GM12878 (cell line): ENCODE measurements at regions of chrX and their contacts with region 1.

Region 1: GRCh38 chrX:130079824-130080406 is 30.4 kb downstream of the ELF4 start:
- DNase-seq: no peak
- ATAC-seq: peak; percentile 14; the same call in 2 of the 3 replicates
- H3K4me3 ChIP-seq: no peak overlapping the region
- H3K27ac ChIP-seq: no peak overlapping the region
- H3K4me1 ChIP-seq: peaks cover 26% of the 10 kb centered on the region
- H3K27me3 ChIP-seq: no peaks in the 10 kb centered on the region; a peak in 1 of 4 replicates
- CTCF ChIP-seq: peak; percentile 76 to 85 (median 77)
- EP300 ChIP-seq: no peak
- POLR2A ChIP-seq: no peak
- RAD21 ChIP-seq: peak; percentile 91

Region 2: DNA sequence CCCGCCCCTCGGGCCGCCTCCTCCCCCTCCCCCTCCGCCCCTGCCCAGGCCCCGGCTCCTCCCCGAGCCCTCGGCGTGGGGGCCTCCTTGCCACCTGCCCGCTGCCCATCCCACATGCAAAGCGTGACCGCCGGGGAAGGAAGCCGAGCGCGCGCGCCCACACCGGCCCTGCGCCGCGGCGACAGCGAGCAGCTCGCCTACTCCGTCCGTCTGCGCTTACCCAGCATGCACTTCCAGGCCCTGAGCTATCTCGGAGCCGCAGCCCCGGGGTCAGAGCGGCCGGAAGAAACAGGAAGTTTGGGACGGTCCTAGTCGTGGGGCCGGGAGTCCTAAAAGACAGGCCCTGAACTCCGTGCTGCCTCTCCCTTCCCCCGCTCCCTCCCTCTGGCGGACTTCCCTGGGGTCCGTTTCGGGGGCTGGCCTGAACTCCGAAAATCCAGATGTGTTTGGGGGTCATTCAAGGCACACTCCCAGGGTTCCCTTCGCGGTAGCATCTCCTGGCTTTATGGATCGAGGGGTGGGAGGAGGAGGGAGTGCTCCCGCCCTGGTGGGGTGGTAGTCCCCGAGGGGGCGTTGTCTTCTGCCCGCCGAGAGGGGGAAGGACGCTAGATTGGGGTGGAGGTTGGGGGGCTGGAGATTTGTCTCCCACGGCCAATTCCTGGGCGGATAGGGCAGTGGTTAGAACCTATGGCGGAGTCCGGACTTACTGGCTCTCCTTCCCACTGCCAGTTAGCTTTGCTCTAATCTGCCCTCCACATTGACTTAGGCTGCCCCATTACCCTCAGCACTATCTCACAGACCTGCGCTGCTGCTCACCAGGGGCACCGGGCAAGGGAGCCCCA is 122.5 kb before region 1 on chrX:
- CTCF ChIA-PET with region 1: no interaction called
- POLR2A ChIA-PET with region 1: no interaction called
- RAD21 ChIA-PET with region 1: no interaction called
- SMC1A ChIA-PET with region 1: no interaction called
- in situ Hi-C with region 1: no loop called
- intact Hi-C with region 1: no loop called
- DNase-seq: peak; percentile 34
- ATAC-seq: peak; percentile 82
- H3K4me3 ChIP-seq: peak overlapping the region; percentile 61; the same call in 1 of the 2 replicates
- H3K27ac ChIP-seq: peak overlapping the region; percentile 35; the same call in 1 of the 2 replicates
- H3K4me1 ChIP-seq: peaks cover 7% of the 10 kb centered on the region
- H3K27me3 ChIP-seq: no peaks in the 10 kb centered on the region
- CTCF ChIP-seq: no peak
- EP300 ChIP-seq: no peak
- POLR2A ChIP-seq: peak; percentile 78
- RAD21 ChIP-seq: no peak

Region 3: DNA sequence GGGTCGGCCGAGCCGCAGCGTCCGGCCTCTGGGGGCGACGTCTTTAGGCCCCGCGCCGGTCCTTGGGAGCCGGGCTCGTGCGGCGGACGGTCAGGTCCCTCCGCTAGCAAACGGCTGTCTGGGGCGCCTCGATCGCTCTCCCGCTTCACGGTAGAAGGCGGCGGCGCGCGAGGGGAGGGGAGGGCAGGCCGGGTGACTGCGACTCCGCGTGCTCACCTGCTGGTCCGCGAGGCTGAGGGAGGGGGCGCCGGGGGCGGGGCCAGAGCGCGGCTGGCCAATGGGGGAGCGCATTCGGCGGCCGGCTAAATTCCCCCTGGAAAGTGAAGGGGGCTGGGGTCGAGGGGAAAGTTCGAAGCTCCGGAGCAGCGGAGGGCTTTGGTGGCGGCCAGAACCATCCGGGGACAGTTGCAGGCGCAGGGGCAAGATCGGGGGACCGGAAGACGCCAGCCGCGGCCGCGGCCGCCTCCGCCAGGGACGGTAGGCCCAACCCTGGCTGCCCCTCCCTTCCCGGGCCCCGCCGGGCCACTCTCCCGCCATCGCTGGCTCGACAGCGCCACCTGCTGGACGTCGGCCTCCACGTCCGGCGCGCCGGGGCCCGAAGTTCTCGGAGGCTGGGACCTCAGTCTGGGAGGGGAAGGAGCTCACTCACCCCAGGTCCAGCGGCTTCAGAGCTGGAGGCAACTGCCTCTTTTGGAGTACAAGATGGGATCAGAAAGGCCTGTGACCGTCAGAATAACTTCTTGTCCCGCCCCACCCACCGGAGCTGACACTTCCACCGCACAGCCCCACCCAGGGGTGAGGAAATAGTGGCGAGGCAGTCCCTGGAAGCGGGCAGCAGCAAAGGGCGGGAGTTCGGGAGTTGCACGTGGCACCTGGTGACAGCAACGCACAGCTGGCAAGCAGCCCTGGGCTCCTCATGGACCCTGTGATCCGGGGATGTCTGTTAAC is 19.5 kb before region 1 on chrX:
- CTCF ChIA-PET with region 1: interaction called, 16 read pairs
- POLR2A ChIA-PET with region 1: no interaction called
- RAD21 ChIA-PET with region 1: no interaction called
- SMC1A ChIA-PET with region 1: interaction called, 3 read pairs
- in situ Hi-C with region 1: no loop called
- intact Hi-C with region 1: no loop called
- DNase-seq: no peak
- ATAC-seq: peak; percentile 98
- H3K4me3 ChIP-seq: peak overlapping the region; percentile 36; the same call in 1 of the 2 replicates
- H3K27ac ChIP-seq: no peak overlapping the region
- H3K4me1 ChIP-seq: peaks cover 3% of the 10 kb centered on the region; the same call in 1 of the 2 replicates
- H3K27me3 ChIP-seq: no peaks in the 10 kb centered on the region
- CTCF ChIP-seq: peak; percentile 66 to 90 (median 76)
- EP300 ChIP-seq: no peak
- POLR2A ChIP-seq: peak; percentile 66
- RAD21 ChIP-seq: peak; percentile 79

Region 4: GRCh38 chrX:130110379-130111219 is 30.7 kb after region 1 on chrX and contains the start of gene ELF4:
- CTCF ChIA-PET with region 1: interaction called, 9 read pairs
- POLR2A ChIA-PET with region 1: interaction called, 27 read pairs
- RAD21 ChIA-PET with region 1: interaction called, 16 read pairs
- SMC1A ChIA-PET with region 1: interaction called, 36 read pairs
- in situ Hi-C with region 1: no loop called
- intact Hi-C with region 1: loop called (anchors 1 kb)
- DNase-seq: no peak
- ATAC-seq: peak; percentile 39
- H3K4me3 ChIP-seq: peak within 1 kb of the TSS; percentile 66
- H3K27ac ChIP-seq: peak within 1 kb of the TSS; percentile 78
- H3K4me1 ChIP-seq: peaks cover 15% of the 10 kb centered on the region
- H3K27me3 ChIP-seq: no peaks in the 10 kb centered on the region; a peak in 1 of 4 replicates
- CTCF ChIP-seq: no peak
- EP300 ChIP-seq: no peak
- POLR2A ChIP-seq: peak; percentile 51; the same call in 1 of the 2 replicates
- RAD21 ChIP-seq: no peak
- polyA plus RNA-seq, gene ELF4: 4.0 to 5.2 TPM

Region 5: DNA sequence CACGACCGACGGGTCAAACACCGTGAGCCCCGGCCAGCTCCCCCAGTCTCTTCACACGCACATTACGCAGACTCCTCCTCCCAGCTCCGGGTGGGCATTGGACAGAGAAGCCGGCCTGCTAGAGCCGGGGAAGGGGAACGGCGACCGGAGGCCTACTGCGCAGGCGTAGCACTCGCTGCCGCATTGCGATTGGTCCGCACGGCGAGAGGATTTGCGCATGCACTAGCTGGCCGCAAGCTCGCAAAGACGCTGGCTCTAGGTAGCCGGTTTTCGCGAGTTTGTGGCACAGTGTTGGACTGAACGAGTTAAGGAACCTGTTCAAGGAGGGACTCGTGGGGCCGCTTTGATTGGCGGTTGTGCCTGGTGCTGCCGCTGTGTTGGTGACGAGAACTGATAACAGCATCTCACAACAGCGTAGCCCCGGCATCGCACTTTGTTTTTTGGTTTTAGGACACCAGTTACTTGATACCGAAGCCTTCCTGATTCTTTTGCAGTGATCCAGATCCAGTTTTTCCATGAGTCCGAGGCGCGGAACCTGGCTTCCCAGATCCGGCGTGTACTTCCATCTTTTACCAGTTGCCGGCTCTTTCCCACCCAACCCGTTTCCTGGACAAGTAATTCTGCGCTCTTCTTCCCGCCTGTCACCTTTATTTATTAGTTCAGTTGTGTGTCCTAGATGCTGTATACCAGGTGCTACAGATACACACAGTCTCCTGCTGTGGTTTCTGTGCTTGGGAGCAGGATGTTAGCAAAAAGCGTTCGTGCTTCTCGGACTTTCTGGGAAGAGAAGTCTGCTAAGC is 86.0 kb after region 1 on chrX and contains the start of gene AIFM1:
- CTCF ChIA-PET with region 1: interaction called, 11 read pairs
- POLR2A ChIA-PET with region 1: interaction called, 28 read pairs
- RAD21 ChIA-PET with region 1: interaction called, 4 read pairs
- SMC1A ChIA-PET with region 1: interaction called, 13 read pairs
- in situ Hi-C with region 1: loop called (anchors 10 kb)
- intact Hi-C with region 1: loop called (anchors 5 kb)
- DNase-seq: peak; percentile 91
- ATAC-seq: peak; percentile 93
- H3K4me3 ChIP-seq: peak within 1 kb of the TSS; percentile 69
- H3K27ac ChIP-seq: peak within 1 kb of the TSS; percentile 70
- H3K4me1 ChIP-seq: peaks cover 4% of the 10 kb centered on the region; the same call in 1 of the 2 replicates
- H3K27me3 ChIP-seq: no peaks in the 10 kb centered on the region
- CTCF ChIP-seq: no peak
- EP300 ChIP-seq: no peak
- POLR2A ChIP-seq: peak; percentile 84
- RAD21 ChIP-seq: no peak
- polyA plus RNA-seq, gene AIFM1: 44.2 to 78.0 TPM

Region 6: DNA sequence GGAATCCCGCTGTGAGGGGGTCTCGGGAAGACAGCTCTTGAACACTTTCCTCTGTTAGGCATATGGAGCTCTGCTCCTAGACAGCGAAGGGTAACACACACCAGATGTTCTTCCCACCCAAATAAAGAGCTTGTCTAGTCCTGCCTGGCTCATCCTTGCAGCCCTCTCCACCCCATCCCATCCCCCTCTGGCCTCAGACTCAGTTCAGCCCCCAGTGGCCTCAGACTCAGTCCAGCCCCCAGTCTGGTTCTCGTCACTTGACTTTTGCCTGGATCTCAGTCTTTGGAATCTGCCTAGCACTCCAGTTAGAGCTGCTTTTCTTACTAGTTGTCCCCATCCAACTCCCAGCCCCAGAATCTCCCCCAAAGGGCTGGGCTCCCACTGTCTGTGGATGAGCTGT is 106.7 kb after region 1 on chrX:
- CTCF ChIA-PET with region 1: interaction called, 132 read pairs
- POLR2A ChIA-PET with region 1: interaction called, 3 read pairs
- RAD21 ChIA-PET with region 1: interaction called, 53 read pairs
- SMC1A ChIA-PET with region 1: interaction called, 69 read pairs
- in situ Hi-C with region 1: no loop called
- intact Hi-C with region 1: no loop called
- DNase-seq: no peak
- ATAC-seq: no peak
- H3K4me3 ChIP-seq: no peak overlapping the region
- H3K27ac ChIP-seq: no peak overlapping the region
- H3K4me1 ChIP-seq: peaks cover 7% of the 10 kb centered on the region
- H3K27me3 ChIP-seq: no peaks in the 10 kb centered on the region
- CTCF ChIP-seq: no peak
- EP300 ChIP-seq: no peak
- POLR2A ChIP-seq: no peak
- RAD21 ChIP-seq: no peak

Region 7: GRCh38 chrX:130268500-130269170 is 188.7 kb after region 1 on chrX and contains the start of gene ZNF280C:
- CTCF ChIA-PET with region 1: interaction called, 4 read pairs
- POLR2A ChIA-PET with region 1: no interaction called
- RAD21 ChIA-PET with region 1: no interaction called
- SMC1A ChIA-PET with region 1: no interaction called
- in situ Hi-C with region 1: no loop called
- intact Hi-C with region 1: loop called (anchors 10 kb)
- DNase-seq: peak; percentile 70
- ATAC-seq: peak; percentile 94
- H3K4me3 ChIP-seq: peak within 1 kb of the TSS; percentile 66
- H3K27ac ChIP-seq: peak within 1 kb of the TSS; percentile 75
- H3K4me1 ChIP-seq: no peaks in the 10 kb centered on the region
- H3K27me3 ChIP-seq: no peaks in the 10 kb centered on the region
- CTCF ChIP-seq: peak; percentile 31 to 33 (median 33); a peak in 4 of 6 replicates
- EP300 ChIP-seq: no peak
- POLR2A ChIP-seq: peak; percentile 96
- RAD21 ChIP-seq: no peak
- polyA plus RNA-seq, gene ZNF280C: 0.82 to 1.8 TPM